ENCODE measurements at regions of chr7 and their contacts with region 1.

Region 1: GRCh38 chr7:140673063-140673773 is 473 bp downstream of the ADCK2 start:
- DNase-seq: peak; percentile 72

Region 2: DNA sequence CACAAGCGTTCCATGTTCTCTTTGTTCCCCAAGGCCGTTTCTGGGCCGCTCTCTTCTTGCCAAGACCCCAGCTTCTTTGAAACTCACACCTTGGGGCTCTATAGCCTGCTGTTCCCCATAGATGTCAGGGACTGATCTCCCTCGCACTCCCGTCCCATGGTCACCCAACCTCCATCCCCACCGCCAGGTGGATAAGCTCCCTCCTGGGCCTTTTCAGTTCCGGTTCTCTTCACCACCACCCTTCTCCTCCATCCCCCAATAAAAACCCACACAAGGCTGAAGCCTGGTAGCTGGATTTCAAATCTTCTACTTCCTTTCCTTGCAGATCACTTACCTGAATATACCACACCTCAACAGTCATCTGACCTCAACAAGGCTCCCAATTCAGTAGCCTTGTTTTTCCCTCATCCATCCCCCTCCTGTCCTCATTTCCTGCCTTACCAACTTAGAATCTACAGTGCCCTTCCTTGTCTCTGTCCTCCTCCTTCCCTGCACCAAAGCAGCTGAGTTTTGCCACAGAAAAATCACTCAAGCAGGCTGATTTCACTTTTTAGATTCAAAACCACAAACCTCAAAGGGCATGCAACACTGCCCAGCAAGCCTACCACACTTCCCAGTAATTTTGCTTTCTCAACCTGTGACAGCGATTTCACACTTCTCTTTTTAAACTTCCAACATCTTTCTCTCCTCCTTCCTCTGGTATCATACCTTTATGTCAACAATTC is 282.6 kb before region 1 on chr7:
- CTCF ChIA-PET with region 1: no interaction called
- POLR2A ChIA-PET with region 1: no interaction called
- DNase-seq: no peak

Region 3: DNA sequence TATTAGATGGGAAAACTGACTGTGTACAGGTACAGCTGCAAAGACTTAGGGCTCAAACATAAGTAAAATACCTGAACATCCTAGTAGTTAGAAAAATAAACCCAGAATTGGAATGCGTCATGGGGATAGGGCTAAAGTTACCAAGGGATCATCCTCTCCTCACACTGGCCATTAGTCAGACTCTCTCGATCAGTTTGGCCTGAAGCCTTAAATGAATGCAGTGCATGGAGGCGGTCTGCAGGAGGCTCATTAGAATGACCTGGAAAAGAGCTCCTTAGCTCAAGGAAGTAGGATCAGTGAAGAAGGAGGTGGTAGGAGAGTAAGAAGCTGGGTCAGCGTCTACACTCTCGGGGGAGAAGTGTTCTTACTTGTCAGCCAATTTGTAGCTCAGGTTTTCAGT is 67.9 kb before region 1 on chr7:
- CTCF ChIA-PET with region 1: no interaction called
- POLR2A ChIA-PET with region 1: no interaction called
- DNase-seq: no peak

Region 4: DNA sequence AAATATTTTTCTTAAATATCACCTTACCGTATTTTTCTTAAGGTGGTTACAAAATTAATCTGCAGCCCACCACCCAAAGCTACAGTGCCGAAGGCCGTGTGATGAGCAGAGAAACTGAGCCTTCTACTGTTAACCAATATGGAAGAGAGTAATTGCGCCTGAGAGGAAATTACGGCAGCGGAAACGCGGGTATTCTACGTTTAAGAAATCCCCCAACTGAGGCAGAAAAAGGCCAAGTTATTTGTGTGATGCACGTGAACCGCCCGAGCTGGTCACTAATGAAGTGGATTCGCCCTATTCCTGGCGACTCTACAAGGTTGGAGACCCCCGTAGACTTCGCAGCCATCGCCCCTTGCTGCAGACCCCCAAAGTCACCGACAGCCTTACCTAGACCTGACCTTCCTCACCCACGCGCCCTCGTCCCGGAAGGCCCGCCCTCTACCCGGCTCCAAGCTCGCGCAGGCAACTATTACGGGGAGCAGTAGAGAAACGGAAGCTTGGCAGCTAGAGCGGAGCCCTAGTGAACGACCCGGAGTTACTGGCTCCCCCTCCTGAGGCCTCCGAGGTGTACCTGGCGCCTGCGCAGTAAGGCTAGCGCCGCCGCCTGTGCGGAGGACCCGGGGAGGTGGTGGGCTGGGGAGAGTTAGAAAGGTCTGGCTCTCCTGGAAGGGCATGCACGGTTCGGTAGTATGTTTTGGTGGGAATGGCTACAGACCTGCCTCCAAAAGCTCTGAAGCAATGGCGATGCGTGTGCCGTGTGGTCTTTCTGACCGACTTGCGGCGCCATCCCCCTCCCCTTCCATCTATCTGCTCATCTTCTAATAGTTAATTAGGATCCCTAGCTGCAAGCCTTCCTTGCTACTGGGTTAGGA is 341.5 kb after region 1 on chr7 and contains the start of gene MRPS33:
- CTCF ChIA-PET with region 1: interaction called, 6 read pairs
- POLR2A ChIA-PET with region 1: interaction called, 22 read pairs
- DNase-seq: peak; percentile 100

Measured in HEK293T (cell line).